H1 (cell line): ENCODE measurements at regions of chr20 and their contacts with region 1.

Region 1: GRCh38 chr20:45450097-45450818 is 19.3 kb upstream of the WFDC2 start:
- DNase-seq: no peak
- H3K4me3 ChIP-seq: no peak overlapping the region
- H3K27ac ChIP-seq: no peak overlapping the region
- H3K4me1 ChIP-seq: no peaks in the 10 kb centered on the region; a peak in 1 of 7 replicates
- H3K27me3 ChIP-seq: no peaks in the 10 kb centered on the region
- CTCF ChIP-seq: peak in 2 of 3 experiments; percentile 56 to 73; a peak in 3 of 4 replicates
- EP300 ChIP-seq: no peak
- POLR2A ChIP-seq: no peak
- RAD21 ChIP-seq: peak; percentile 43 to 49

Region 2: GRCh38 chr20:45311589-45312211 is 138.6 kb before region 1 on chr20:
- CTCF ChIA-PET with region 1: interaction called, 12 read pairs
- POLR2A ChIA-PET with region 1: no interaction called
- DNase-seq: peak in 1 of 2 experiments; percentile 93
- H3K4me3 ChIP-seq: peak overlapping the region; percentile 24 to 55 (median 48); a peak in 7 of 8 replicates
- H3K27ac ChIP-seq: no peak overlapping the region
- H3K4me1 ChIP-seq: peaks cover 0 to 11% (median 7%) of the 10 kb centered on the region in 4 experiments; a peak in 5 of 7 replicates
- H3K27me3 ChIP-seq: peaks cover 0 to 15% (median 5%) of the 10 kb centered on the region in 4 experiments; a peak in 5 of 7 replicates
- CTCF ChIP-seq: peak; percentile 87 to 96 (median 95)
- EP300 ChIP-seq: no peak
- POLR2A ChIP-seq: no peak
- RAD21 ChIP-seq: peak; percentile 69 to 73

Region 3: DNA sequence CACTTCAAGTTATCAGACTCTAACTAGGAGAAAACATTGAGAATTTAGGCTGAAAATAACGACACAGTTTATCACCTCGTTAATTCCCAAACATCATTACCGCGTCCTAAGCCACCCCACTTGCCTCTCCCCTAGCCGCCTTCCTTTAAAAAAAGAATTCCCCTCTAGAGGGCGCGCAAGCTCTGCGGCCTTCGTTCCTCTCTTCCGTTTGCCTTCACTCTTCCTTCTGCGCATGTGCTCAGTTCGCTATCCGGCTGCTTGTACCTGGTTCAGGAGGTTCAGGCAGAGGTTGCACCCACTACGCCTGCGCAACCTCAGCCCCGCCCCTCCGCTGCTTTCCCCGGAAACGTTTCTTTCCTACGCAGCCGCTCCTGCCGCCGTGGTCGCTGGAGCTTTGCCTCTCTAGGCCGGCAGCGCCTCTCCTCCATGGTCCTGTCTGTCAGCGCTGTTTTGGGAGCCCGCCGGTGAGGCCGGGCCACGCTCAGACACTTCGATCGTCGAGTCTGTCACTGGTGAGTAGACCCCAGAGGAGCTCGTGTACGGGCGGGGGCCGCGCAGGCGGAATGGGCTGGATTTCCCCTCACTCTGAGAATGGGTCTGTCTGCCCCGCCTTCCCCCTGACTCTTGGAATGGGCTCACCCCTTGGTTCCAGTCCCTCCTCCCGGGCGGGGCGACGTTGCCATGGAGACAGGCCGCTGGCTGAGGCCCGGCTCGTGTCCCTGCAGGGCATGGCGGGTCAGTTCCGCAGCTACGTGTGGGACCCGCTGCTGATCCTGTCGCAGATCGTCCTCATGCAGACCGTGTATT is 87.3 kb before region 1 on chr20 and contains the start of gene SYS1:
- CTCF ChIA-PET with region 1: interaction called, 10 read pairs
- POLR2A ChIA-PET with region 1: interaction called, 3 read pairs
- DNase-seq: peak; percentile 97 to 99
- H3K4me3 ChIP-seq: peak within 1 kb of the TSS; percentile 54 to 98 (median 80)
- H3K27ac ChIP-seq: peak within 1 kb of the TSS; percentile 72
- H3K4me1 ChIP-seq: peaks cover 3 to 12% (median 6%) of the 10 kb centered on the region in 4 experiments; a peak in 6 of 7 replicates
- H3K27me3 ChIP-seq: no peaks in the 10 kb centered on the region
- CTCF ChIP-seq: peak; percentile 70 to 91 (median 83)
- EP300 ChIP-seq: peak in 1 of 2 experiments; percentile 52; a peak in 1 of 3 replicates
- POLR2A ChIP-seq: peak in 1 of 2 experiments; percentile 81; a peak in 2 of 3 replicates
- RAD21 ChIP-seq: peak; percentile 82 to 83
- total RNA-seq, gene SYS1: 18.2 and 19.6 TPM in 2 replicates

Region 4: GRCh38 chr20:45470262-45470931 is 20.1 kb after region 1 on chr20:
- CTCF ChIA-PET with region 1: interaction called, 317 read pairs
- POLR2A ChIA-PET with region 1: interaction called, 9 read pairs
- DNase-seq: peak in 1 of 2 experiments; percentile 87
- H3K4me3 ChIP-seq: peak overlapping the region; percentile 63 to 77 (median 70)
- H3K27ac ChIP-seq: peak overlapping the region; percentile 36; the same call in 1 of the 2 replicates
- H3K4me1 ChIP-seq: peaks cover 2 to 20% (median 7%) of the 10 kb centered on the region in 4 experiments
- H3K27me3 ChIP-seq: peaks cover 0 to 4% (median 1%) of the 10 kb centered on the region in 4 experiments; a peak in 3 of 7 replicates
- CTCF ChIP-seq: no peak
- EP300 ChIP-seq: no peak
- POLR2A ChIP-seq: peak in 1 of 2 experiments; percentile 67; a peak in 1 of 3 replicates
- RAD21 ChIP-seq: no peak

Region 5: DNA sequence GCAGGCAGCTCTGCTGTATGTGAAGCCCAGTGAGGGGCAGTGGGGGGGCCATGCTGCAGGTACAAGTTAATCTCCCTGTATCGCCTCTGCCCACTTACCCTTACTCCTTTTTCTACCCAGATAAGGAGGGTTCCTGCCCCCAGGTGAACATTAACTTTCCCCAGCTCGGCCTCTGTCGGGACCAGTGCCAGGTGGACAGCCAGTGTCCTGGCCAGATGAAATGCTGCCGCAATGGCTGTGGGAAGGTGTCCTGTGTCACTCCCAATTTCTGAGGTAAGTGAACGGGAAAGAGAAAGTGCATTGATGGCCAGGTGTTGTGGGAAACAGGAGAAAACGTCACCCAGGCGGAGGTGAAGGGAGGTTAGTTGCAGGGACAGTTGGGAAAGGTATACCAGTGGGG is 29.6 kb after region 1 on chr20:
- CTCF ChIA-PET with region 1: interaction called, 44 read pairs
- POLR2A ChIA-PET with region 1: no interaction called
- DNase-seq: no peak
- H3K4me3 ChIP-seq: no peak overlapping the region
- H3K27ac ChIP-seq: no peak overlapping the region
- H3K4me1 ChIP-seq: peaks cover 0 to 6% (median 0%) of the 10 kb centered on the region in 4 experiments; a peak in 2 of 7 replicates
- H3K27me3 ChIP-seq: no peaks in the 10 kb centered on the region
- CTCF ChIP-seq: no peak
- EP300 ChIP-seq: no peak
- POLR2A ChIP-seq: no peak
- RAD21 ChIP-seq: no peak

Region 6: DNA sequence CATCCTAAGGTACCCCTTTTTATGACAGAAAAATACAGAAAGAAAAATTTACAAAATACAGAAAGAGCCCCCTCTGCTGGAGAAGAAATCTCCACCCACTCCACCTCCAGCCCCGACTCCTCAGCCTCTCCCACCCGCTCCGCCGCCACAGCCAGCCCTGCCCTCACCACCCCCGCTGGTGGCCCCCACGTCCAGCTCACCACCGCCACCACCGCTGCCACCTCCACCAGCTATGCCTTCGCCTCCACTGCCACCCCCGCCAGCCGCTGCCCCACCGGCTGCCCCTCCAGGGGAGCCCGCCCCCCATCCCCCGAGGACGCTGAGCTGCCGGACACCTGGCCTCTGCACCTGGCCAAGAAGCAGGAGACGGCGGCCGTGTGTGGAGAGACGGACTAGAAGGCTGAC is 37.0 kb after region 1 on chr20:
- CTCF ChIA-PET with region 1: interaction called, 44 read pairs
- POLR2A ChIA-PET with region 1: no interaction called
- DNase-seq: peak in 1 of 2 experiments; percentile 77
- H3K4me3 ChIP-seq: peak overlapping the region; percentile 38 to 60 (median 43)
- H3K27ac ChIP-seq: no peak overlapping the region
- H3K4me1 ChIP-seq: peaks cover 0 to 11% (median 0%) of the 10 kb centered on the region in 4 experiments; a peak in 2 of 7 replicates
- H3K27me3 ChIP-seq: no peaks in the 10 kb centered on the region
- CTCF ChIP-seq: peak; percentile 26 to 46 (median 46); a peak in 3 of 4 replicates
- EP300 ChIP-seq: no peak
- POLR2A ChIP-seq: no peak
- RAD21 ChIP-seq: peak; percentile 37 to 46